ENCODE measurements at regions of chr16 and their contacts with region 1.

Region 1: DNA sequence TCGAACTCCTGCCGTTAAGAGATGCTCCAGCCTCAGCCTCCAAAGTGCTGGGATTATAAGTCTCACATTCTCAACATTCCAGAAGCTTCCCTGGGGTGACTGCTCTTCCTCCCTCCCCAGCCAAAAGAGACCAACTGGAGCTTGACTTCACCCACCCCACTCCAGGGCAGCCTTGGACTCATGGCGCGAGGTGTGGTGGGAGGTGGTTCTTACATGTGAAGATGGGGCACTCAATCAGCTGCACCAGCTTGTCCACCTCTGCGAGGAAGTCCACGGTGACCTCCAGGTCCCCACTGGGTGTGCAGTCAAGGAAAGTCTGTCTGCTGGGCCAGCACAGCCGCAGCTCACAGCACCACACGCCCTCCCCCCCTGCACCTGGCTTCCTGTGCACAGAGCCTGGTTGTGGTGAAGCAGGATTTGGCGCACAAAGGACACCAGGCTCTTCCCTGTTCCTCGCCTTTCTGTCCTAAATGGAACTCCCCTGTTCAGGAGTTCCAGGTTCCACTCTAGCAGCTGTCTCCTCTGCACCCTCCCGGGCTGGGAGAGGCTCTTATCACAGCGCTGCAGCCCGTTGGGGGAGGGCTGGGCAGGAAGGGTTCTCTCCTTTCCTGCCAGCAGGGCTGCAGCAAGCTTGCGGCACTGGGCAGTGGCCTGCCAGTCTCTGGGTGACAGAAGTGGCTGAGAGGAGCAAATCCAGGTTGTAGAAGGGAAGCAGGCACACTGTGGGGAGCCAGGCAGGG is 9.6 kb upstream of the MTSS2 start:
- DNase-seq: peak; percentile 62 to 70
- H3K4me3 ChIP-seq: no peak overlapping the region
- H3K27ac ChIP-seq: peak overlapping the region; percentile 79
- H3K4me1 ChIP-seq: peaks cover 63% of the 10 kb centered on the region
- H3K27me3 ChIP-seq: no peaks in the 10 kb centered on the region
- CTCF ChIP-seq: no peak

Region 2: DNA sequence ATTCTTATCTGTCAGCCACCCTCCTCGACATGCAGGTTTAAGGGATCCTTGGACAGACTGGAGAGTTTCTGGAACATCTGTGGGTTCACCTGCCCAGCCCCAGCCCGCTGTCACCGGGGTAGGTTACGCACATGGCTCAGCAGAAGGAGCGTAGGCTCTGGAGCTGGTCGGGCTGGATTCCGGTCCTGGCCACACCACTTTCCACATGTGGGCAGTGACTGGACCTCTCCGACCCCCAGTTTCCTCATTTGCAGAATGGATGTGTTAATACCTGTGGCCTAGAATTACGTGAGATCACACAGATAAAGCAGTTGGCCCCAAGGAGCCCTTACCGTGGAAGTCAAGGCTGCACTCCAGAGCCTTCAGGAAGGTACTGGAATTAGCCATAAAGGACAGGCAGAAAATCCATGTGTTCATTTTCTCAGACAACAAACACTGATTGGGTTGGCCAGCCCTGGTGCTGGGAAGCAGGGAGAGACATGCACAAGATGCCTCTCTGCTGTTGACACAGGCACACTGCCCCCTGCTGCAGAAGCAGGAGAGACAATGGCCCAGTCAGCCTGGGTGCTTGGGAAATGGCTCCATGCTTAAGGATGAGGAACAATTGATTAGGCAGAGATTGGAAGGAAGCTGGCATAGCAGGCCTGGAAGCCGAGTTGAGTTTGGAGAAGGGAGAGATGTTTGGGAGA is 113.1 kb before region 1 on chr16:
- CTCF ChIA-PET with region 1: no interaction called
- POLR2A ChIA-PET with region 1: no interaction called
- intact Hi-C with region 1: no loop called
- DNase-seq: peak; percentile 54 to 71
- H3K4me3 ChIP-seq: no peak overlapping the region
- H3K27ac ChIP-seq: no peak overlapping the region
- H3K4me1 ChIP-seq: peaks cover 18% of the 10 kb centered on the region
- H3K27me3 ChIP-seq: no peaks in the 10 kb centered on the region
- CTCF ChIP-seq: peak; percentile 37; the same call in 1 of the 2 replicates

Region 3: GRCh38 chr16:70594576-70594975 is 100.9 kb before region 1 on chr16:
- CTCF ChIA-PET with region 1: no interaction called
- POLR2A ChIA-PET with region 1: no interaction called
- intact Hi-C with region 1: no loop called
- DNase-seq: peak; percentile 67 to 75
- H3K4me3 ChIP-seq: no peak overlapping the region
- H3K27ac ChIP-seq: no peak overlapping the region
- H3K4me1 ChIP-seq: peaks cover 9% of the 10 kb centered on the region; the same call in 1 of the 2 replicates
- H3K27me3 ChIP-seq: no peaks in the 10 kb centered on the region
- CTCF ChIP-seq: no peak

Region 4: DNA sequence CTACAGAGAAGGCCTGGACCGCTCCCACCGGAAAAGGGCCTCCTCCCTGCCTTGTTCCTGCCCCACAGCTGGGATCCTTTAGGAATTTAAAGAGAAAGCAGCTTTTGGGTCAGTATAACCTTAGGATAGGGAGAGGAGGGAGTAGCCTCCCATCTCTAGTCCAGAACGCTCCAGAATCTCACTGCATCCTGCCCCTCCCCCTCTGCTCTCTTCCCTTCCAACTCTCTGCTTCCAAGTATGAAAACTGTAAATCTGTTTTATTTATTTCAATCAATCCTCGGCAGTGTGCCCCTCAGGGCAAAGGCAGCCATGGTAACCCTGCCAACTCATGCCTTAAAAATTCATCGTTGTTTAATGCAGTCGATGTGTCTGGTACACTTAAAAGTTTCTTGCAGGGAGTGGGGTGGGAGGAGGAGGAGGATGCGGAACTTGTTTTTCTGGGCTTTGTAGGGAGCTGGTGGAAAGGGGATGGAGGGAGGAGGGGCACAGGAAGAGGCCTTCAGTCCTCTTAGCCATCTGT is 11.5 kb after region 1 on chr16:
- CTCF ChIA-PET with region 1: interaction called, 5 read pairs
- POLR2A ChIA-PET with region 1: no interaction called
- intact Hi-C with region 1: loop called (anchors 1 kb)
- DNase-seq: peak; percentile 89 to 91
- H3K4me3 ChIP-seq: peak overlapping the region; percentile 25; the same call in 1 of the 2 replicates
- H3K27ac ChIP-seq: peak overlapping the region; percentile 60
- H3K4me1 ChIP-seq: peaks cover 25% of the 10 kb centered on the region
- H3K27me3 ChIP-seq: no peaks in the 10 kb centered on the region
- CTCF ChIP-seq: no peak

Region 5: GRCh38 chr16:70715055-70715858 is 19.8 kb after region 1 on chr16:
- CTCF ChIA-PET with region 1: no interaction called
- POLR2A ChIA-PET with region 1: interaction called, 23 read pairs
- intact Hi-C with region 1: loop called (anchors 2 kb)
- DNase-seq: peak; percentile 93 to 95
- H3K4me3 ChIP-seq: no peak overlapping the region
- H3K27ac ChIP-seq: peak overlapping the region; percentile 76
- H3K4me1 ChIP-seq: peaks cover 28% of the 10 kb centered on the region
- H3K27me3 ChIP-seq: no peaks in the 10 kb centered on the region
- CTCF ChIP-seq: peak; percentile 25

Region 6: DNA sequence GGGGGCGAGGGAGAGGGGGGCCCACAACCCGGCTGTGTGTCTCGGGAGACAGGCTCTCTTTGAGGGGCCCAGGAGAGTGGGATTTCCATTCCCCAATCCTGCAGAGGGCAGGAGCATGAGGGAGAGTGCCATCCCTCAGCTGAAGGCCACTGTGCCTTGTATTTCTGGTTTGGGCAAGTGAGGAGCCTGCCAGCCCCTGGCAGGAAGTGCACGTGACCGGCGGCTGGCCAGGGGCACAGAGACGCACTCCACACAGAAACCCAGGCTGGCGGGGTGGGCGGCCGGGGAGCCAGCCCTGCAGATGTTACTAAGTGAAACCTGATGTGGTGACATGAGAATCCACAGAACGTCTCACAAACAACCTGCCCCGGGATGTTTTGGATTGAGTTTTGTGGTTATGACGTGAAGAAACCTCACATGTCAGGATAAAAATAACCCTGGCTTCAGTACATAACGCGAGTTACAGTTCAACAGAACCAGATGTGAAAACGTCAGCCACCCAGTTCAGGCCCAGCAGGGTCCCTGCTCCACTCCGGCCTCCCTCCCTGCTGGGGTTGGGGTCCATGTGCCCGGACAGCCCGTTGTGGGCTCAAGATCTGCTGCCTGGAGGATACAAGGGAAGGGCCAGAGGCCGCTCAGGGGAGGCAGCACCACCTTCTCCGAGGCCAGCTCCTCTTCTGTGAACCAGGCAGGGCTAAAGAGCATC is 42.0 kb after region 1 on chr16:
- CTCF ChIA-PET with region 1: no interaction called
- POLR2A ChIA-PET with region 1: no interaction called
- intact Hi-C with region 1: no loop called
- DNase-seq: peak in 1 of 2 experiments; percentile 58
- H3K4me3 ChIP-seq: no peak overlapping the region
- H3K27ac ChIP-seq: no peak overlapping the region
- H3K4me1 ChIP-seq: no peaks in the 10 kb centered on the region
- H3K27me3 ChIP-seq: no peaks in the 10 kb centered on the region
- CTCF ChIP-seq: no peak

Region 7: GRCh38 chr16:70770626-70771552 is 75.4 kb after region 1 on chr16:
- CTCF ChIA-PET with region 1: interaction called, 4 read pairs
- POLR2A ChIA-PET with region 1: no interaction called
- intact Hi-C with region 1: loop called (anchors 1 kb)
- DNase-seq: peak; percentile 67 to 76
- H3K4me3 ChIP-seq: no peak overlapping the region
- H3K27ac ChIP-seq: no peak overlapping the region
- H3K4me1 ChIP-seq: peaks cover 25% of the 10 kb centered on the region
- H3K27me3 ChIP-seq: no peaks in the 10 kb centered on the region
- CTCF ChIP-seq: peak; percentile 98

Measured in PC-9 (cell line).